Activated CD4-positive, alpha-beta T cell treated with anti-CD3 and anti-CD28 coated beads, Interleukin-2, amount 10 ng/mL, durations not matched to agents 24 days and 14 days (primary cell): ENCODE measurements at regions of chr5 and their contacts with region 1.

Region 1: DNA sequence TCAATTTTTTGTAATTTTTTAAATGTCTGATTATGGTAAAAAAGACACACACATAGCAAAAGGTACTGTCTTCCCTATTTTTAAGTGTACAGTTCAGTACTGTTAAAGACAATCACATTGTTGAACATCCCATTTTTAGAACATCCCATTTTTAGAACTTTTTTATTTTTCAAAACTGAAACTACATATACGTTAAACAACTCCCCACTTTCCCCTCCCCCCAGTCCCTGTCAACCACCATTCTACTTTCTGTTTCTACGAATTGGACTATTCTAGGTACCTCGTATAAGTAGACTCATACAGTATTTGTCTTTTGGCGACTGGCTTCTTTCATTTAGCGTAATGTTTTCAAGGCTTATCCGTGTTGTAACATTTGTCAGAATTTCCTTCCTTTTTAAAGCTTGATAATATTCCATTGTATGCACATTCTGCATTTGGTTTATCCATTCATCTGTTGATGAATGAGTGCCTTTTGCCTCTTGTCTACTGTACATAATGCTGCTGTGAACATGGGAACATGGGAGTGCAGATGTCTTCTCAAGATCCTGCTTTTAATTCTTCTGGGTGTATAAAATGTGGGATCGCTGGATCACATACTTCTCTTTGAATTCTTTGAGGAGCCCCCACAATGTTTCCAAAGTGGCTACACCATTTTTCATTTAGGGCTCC is 154.0 kb downstream of the PIK3R1 start:
- DNase-seq: peak; percentile 90
- H3K4me3 Mint-ChIP-seq: peak overlapping the region; percentile 69
- H3K27ac Mint-ChIP-seq: peak overlapping the region; percentile 77
- H3K4me1 Mint-ChIP-seq: peaks cover 40% of the 10 kb centered on the region
- H3K27me3 Mint-ChIP-seq: no peaks in the 10 kb centered on the region

Region 2: GRCh38 chr5:67038817-67039603 is 1330.6 kb before region 1 on chr5:
- intact Hi-C with region 1: loop called (anchors 10 kb)
- DNase-seq: no peak
- H3K4me3 Mint-ChIP-seq: no peak overlapping the region
- H3K27ac Mint-ChIP-seq: peak overlapping the region; percentile 54
- H3K4me1 Mint-ChIP-seq: peaks cover 30% of the 10 kb centered on the region
- H3K27me3 Mint-ChIP-seq: no peaks in the 10 kb centered on the region

Region 3: DNA sequence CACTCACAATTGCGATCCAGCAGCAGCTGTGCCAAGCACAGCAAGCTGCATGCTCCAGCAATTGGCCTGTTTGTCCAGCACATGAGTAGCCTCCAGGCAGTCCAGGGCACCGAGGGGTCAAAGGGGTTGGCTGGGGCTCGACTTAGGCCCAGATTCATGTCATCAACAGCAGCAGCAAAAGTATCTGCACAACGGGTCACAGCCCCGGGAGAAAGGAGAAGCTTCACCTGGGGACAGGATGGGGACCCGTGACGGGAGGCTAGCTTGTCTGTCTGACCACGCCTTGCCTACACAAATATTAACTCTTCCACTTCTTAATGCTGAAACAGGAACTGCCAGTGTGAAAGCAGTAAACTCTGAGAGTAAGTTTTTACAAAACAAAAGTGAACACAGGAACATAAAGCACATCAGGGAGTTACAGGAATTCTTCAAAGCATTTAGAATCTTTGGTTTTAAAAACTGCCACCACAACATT is 37.2 kb after region 1 on chr5:
- intact Hi-C with region 1: loop called (anchors 2 kb)
- DNase-seq: peak; percentile 69
- H3K4me3 Mint-ChIP-seq: peak overlapping the region; percentile 57
- H3K27ac Mint-ChIP-seq: peak overlapping the region; percentile 79
- H3K4me1 Mint-ChIP-seq: peaks cover 26% of the 10 kb centered on the region
- H3K27me3 Mint-ChIP-seq: no peaks in the 10 kb centered on the region

Region 4: GRCh38 chr5:68424799-68425537 is 55.4 kb after region 1 on chr5:
- intact Hi-C with region 1: loop called (anchors 1 kb)
- DNase-seq: peak; percentile 82
- H3K4me3 Mint-ChIP-seq: peak overlapping the region; percentile 27
- H3K27ac Mint-ChIP-seq: peak overlapping the region; percentile 73
- H3K4me1 Mint-ChIP-seq: peaks cover 46% of the 10 kb centered on the region
- H3K27me3 Mint-ChIP-seq: peaks cover 15% of the 10 kb centered on the region

Region 5: GRCh38 chr5:68433923-68434879 is 64.6 kb after region 1 on chr5:
- intact Hi-C with region 1: loop called (anchors 1 kb)
- DNase-seq: peak; percentile 96
- H3K4me3 Mint-ChIP-seq: peak overlapping the region; percentile 66
- H3K27ac Mint-ChIP-seq: peak overlapping the region; percentile 84
- H3K4me1 Mint-ChIP-seq: peaks cover 54% of the 10 kb centered on the region
- H3K27me3 Mint-ChIP-seq: peaks cover 37% of the 10 kb centered on the region